Posterior vena cava (tissue), 2 donors: ENCODE measurements at regions of chr6 and their contacts with region 1.

Region 1: DNA sequence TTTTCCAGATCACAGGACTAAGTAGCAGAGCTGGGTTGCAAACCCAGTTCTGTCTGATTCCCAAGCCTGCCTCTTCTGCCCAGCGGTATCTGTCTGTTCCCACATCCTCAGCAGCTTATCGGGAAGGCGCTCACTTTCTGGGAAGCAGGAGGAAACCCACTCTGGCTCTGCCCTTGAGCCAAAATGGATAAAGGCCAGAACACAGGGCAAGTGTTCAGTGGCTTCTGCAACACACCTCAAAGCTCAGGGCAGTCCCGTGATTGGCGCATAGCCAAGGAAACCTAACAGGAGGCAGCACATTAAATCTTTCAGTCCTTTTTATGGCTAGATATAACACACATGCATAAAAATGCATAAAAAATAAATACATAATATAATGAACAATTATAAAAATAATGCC is 262.2 kb downstream of the NRN1 start:
- DNase-seq: no peak

Region 2: GRCh38 chr6:5569491-5569890 is 175.0 kb before region 1 on chr6:
- intact Hi-C with region 1: no loop called
- DNase-seq: no peak

Region 3: GRCh38 chr6:5667737-5668136 is 76.8 kb before region 1 on chr6:
- intact Hi-C with region 1: loop called in 1 of 2 experiments (anchors 2 kb)
- DNase-seq: no peak

Region 4: GRCh38 chr6:5718231-5718947 is 26.1 kb before region 1 on chr6:
- intact Hi-C with region 1: no loop called
- DNase-seq: no peak

Region 5: DNA sequence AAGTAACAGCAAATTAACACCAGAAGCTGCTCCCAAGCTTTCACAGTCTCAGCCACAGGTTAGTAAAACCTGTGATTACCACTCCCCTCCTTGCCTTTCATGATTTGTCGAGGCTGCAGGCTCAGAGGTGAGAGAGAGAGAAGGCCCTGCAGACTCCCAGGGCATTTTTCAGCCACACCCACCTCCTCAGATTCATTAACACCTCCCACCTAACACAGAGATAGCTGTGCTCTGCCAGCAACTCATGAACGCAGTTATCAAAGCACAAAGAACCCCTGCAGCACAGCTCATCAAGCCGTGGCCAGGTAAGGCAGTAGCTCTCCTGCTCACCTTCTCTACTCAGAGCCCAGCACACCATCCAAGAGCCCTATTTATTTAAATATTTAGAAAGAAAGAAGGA is 548.8 kb after region 1 on chr6:
- intact Hi-C with region 1: no loop called
- DNase-seq: no peak